ENCODE measurements at regions of chr1 and their contacts with region 1.

Region 1: GRCh38 chr1:207963427-207964194 is 52.7 kb upstream of the CD34 start:
- DNase-seq: peak; percentile 95
- H3K4me3 Mint-ChIP-seq: peak overlapping the region; percentile 69
- H3K27ac Mint-ChIP-seq: peak overlapping the region; percentile 57
- H3K4me1 Mint-ChIP-seq: peaks cover 27% of the 10 kb centered on the region
- H3K27me3 Mint-ChIP-seq: no peaks in the 10 kb centered on the region
- CTCF ChIP-seq: peak; percentile 100

Region 2: GRCh38 chr1:207828485-207829158 is 135.0 kb before region 1 on chr1:
- CTCF ChIA-PET with region 1: interaction called, 128 read pairs
- POLR2A ChIA-PET with region 1: interaction called, 17 read pairs
- intact Hi-C with region 1: loop called (anchors 1 kb)
- DNase-seq: peak; percentile 96
- H3K4me3 Mint-ChIP-seq: no peak overlapping the region
- H3K27ac Mint-ChIP-seq: peak overlapping the region; percentile 96
- H3K4me1 Mint-ChIP-seq: peaks cover 78% of the 10 kb centered on the region
- H3K27me3 Mint-ChIP-seq: no peaks in the 10 kb centered on the region
- CTCF ChIP-seq: peak; percentile 99

Region 3: GRCh38 chr1:207876131-207876530 is 87.5 kb before region 1 on chr1:
- CTCF ChIA-PET with region 1: interaction called, 405 read pairs
- POLR2A ChIA-PET with region 1: interaction called, 96 read pairs
- intact Hi-C with region 1: no loop called
- DNase-seq: no peak
- H3K4me3 Mint-ChIP-seq: no peak overlapping the region
- H3K27ac Mint-ChIP-seq: no peak overlapping the region
- H3K4me1 Mint-ChIP-seq: no peaks in the 10 kb centered on the region
- H3K27me3 Mint-ChIP-seq: peaks cover 21% of the 10 kb centered on the region
- CTCF ChIP-seq: no peak

Region 4: DNA sequence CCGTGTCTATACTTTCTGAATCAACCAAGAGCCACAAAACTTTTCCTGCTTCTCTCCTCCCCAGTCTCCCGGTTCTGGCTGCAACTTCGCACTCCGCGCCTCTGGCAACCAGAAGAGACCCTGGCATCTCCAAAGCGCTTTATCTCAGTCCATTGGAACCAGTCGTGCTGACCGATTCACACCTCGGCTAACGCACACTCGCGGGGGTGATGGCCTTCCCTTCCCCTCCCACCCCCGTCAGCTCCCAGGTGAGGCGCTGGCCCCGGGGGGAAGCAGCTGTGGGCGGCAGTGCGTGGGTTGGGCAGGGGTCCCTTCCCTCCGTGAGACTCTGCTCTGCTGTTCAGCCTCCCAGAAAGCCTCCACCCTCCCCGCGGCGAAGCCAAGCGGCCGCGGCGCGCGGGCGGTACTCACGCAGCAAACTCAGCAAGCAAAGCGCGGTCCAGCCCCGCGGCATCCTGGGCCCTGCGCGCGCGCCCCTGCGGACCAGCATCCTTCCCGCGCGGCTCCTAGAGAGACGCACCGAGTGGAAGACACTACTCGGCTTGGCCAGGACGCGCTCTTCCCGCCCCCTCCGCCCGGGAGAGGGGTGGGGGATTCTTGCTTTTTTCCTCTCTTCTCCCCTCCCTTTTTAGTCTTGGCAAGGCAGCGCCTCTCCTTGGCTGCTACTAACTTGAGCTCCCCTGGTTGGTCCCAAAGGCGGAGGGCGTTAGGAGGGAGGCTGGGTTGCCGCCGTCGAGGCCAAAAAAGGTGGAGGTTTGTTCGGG is 52.8 kb before region 1 on chr1 and contains the start of gene CD34:
- CTCF ChIA-PET with region 1: interaction called, 39 read pairs
- POLR2A ChIA-PET with region 1: interaction called, 3 read pairs
- intact Hi-C with region 1: no loop called
- DNase-seq: no peak
- H3K4me3 Mint-ChIP-seq: no peak within 1 kb of the TSS
- H3K27ac Mint-ChIP-seq: no peak within 1 kb of the TSS
- H3K4me1 Mint-ChIP-seq: peaks cover 6% of the 10 kb centered on the region
- H3K27me3 Mint-ChIP-seq: peaks cover 25% of the 10 kb centered on the region
- CTCF ChIP-seq: no peak
- total RNA-seq, gene CD34: 0.52 TPM in 1 of 2 replicates, not detected in the other

Region 5: GRCh38 chr1:207941665-207942064 is 21.9 kb before region 1 on chr1:
- CTCF ChIA-PET with region 1: interaction called, 78 read pairs
- POLR2A ChIA-PET with region 1: interaction called, 14 read pairs
- intact Hi-C with region 1: no loop called
- DNase-seq: peak; percentile 48
- H3K4me3 Mint-ChIP-seq: no peak overlapping the region
- H3K27ac Mint-ChIP-seq: no peak overlapping the region
- H3K4me1 Mint-ChIP-seq: peaks cover 6% of the 10 kb centered on the region
- H3K27me3 Mint-ChIP-seq: no peaks in the 10 kb centered on the region
- CTCF ChIP-seq: no peak

Region 6: DNA sequence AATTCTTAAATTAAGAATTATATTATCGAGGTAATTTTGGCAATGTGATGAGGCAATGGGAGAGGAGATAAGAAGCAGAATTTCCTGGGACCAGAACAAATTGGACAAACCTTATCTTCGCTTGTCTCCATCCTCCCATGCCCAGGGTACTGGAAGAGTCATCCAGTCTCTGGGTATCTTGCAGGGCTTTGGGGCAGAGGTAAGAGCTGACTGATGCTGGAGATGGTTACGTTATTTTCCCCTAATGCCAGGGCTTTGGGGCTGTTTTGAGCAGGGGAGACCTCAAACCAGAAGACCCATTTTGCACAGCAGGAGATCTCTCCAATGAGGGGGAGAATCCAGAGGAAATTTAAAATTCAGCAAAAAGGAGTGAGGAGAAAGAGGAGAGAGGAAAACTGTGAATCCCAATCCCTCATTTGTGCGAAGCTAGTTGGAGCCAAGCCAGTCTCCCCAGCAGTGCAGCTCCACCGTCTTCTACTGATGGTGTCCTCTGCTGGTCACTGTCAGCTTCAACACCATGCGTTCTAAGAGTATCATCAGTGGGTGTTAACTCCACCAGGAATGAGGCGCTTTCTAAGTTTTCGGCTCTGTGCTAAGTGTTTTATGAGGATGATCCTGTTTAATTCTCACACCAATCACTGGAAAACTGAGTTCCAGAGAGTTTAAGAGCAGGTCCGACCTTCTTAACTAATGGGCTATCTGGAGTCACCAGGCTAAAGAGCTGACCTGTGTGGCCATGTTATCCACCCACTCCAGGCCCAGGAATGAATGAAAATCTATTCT is 34.1 kb after region 1 on chr1:
- CTCF ChIA-PET with region 1: interaction called, 31 read pairs
- POLR2A ChIA-PET with region 1: interaction called, 4 read pairs
- intact Hi-C with region 1: no loop called
- DNase-seq: peak; percentile 92
- H3K4me3 Mint-ChIP-seq: no peak overlapping the region
- H3K27ac Mint-ChIP-seq: no peak overlapping the region
- H3K4me1 Mint-ChIP-seq: no peaks in the 10 kb centered on the region
- H3K27me3 Mint-ChIP-seq: peaks cover 38% of the 10 kb centered on the region
- CTCF ChIP-seq: peak; percentile 95